Dendritic cell treated with granulocyte-macrophage colony-stimulating factor and Interleukin-4, amounts not matched to agents 40 ng/mL and 50 ng/mL, for 4 days (primary cell): ENCODE measurements at regions of chr17 and their contacts with region 1.

Region 1: GRCh38 chr17:1882836-1883235 is 53.0 kb downstream of the RPA1 start:
- H3K4me3 Mint-ChIP-seq: no peak overlapping the region
- H3K27ac Mint-ChIP-seq: no peak overlapping the region
- H3K4me1 Mint-ChIP-seq: no peaks in the 10 kb centered on the region
- H3K27me3 Mint-ChIP-seq: no peaks in the 10 kb centered on the region

Region 2: DNA sequence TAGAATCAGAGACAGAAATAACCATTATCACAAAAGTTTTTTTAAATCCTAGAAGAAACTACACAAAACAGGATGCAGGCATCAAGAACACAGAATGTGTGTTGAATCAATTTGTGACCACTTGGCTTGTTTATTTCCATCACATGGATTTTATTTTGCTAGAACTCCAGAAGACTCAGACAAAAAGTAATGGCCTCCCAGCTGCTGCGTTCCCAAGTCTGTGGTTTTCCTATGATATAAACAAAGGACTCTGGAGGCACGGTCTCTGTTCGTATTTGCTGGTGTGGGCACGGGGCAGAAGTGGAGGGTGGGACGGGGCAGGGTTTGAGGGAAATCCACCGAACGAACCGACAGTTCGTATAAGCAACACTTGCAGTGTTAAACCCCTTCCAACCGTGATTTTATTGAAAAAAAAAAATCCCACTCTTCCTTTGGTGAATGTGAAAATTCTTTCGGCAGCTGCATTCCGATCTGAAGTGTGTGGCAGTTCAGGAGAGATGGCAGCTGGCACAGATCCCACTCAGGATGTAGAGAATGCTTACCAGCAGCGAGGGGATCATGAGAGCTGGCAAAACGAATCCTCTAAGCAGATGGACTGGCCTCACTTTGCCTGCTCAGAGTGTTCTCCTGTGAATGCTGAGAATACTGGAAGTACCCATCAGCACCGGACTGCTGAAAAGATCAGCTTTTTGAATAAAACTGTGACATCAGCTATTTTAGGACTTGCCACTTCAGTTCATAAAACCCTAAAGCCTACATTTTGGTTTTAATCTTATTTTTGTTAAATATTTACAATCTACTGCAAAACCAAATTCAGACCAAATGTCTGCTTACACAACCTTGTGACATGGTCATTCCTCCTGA is 1333.4 kb before region 1 on chr17:
- intact Hi-C with region 1: no loop called
- H3K4me3 Mint-ChIP-seq: no peak overlapping the region
- H3K27ac Mint-ChIP-seq: no peak overlapping the region
- H3K4me1 Mint-ChIP-seq: peaks cover 26% of the 10 kb centered on the region
- H3K27me3 Mint-ChIP-seq: no peaks in the 10 kb centered on the region

Region 3: GRCh38 chr17:2282297-2282873 is 399.5 kb after region 1 on chr17:
- intact Hi-C with region 1: loop called (anchors 5 kb)
- H3K4me3 Mint-ChIP-seq: no peak overlapping the region
- H3K27ac Mint-ChIP-seq: no peak overlapping the region
- H3K4me1 Mint-ChIP-seq: peaks cover 5% of the 10 kb centered on the region
- H3K27me3 Mint-ChIP-seq: no peaks in the 10 kb centered on the region